ENCODE measurements at regions of chr18 and their contacts with region 1.

Region 1: GRCh38 chr18:616380-616995 is 19.7 kb downstream of the CLUL1 start:
- DNase-seq: peak; percentile 65
- ATAC-seq: peak; percentile 84
- H3K4me3 ChIP-seq: no peak overlapping the region
- H3K27ac ChIP-seq: no peak overlapping the region
- H3K4me1 ChIP-seq: no peaks in the 10 kb centered on the region
- H3K27me3 ChIP-seq: peaks cover 52% of the 10 kb centered on the region
- CTCF ChIP-seq: peak; percentile 79

Region 2: GRCh38 chr18:286515-287310 is 329.8 kb before region 1 on chr18:
- CTCF ChIA-PET with region 1: no interaction called
- POLR2A ChIA-PET with region 1: no interaction called
- intact Hi-C with region 1: loop called (anchors 1 kb)
- DNase-seq: peak; percentile 38
- ATAC-seq: peak; percentile 61; the same call in 1 of the 2 replicates
- H3K4me3 ChIP-seq: no peak overlapping the region
- H3K27ac ChIP-seq: no peak overlapping the region
- H3K4me1 ChIP-seq: no peaks in the 10 kb centered on the region
- H3K27me3 ChIP-seq: peaks cover 13% of the 10 kb centered on the region; the same call in 1 of the 2 replicates
- CTCF ChIP-seq: peak; percentile 70

Region 3: GRCh38 chr18:477565-477964 is 138.9 kb before region 1 on chr18:
- CTCF ChIA-PET with region 1: no interaction called
- POLR2A ChIA-PET with region 1: no interaction called
- intact Hi-C with region 1: loop called (anchors 10 kb)
- DNase-seq: peak; percentile 50
- ATAC-seq: peak; percentile 60
- H3K4me3 ChIP-seq: no peak overlapping the region
- H3K27ac ChIP-seq: no peak overlapping the region
- H3K4me1 ChIP-seq: peaks cover 7% of the 10 kb centered on the region; the same call in 1 of the 2 replicates
- H3K27me3 ChIP-seq: peaks cover 18% of the 10 kb centered on the region
- CTCF ChIP-seq: peak; percentile 77

Region 4: GRCh38 chr18:499551-500408 is 116.7 kb before region 1 on chr18:
- CTCF ChIA-PET with region 1: no interaction called
- POLR2A ChIA-PET with region 1: no interaction called
- intact Hi-C with region 1: loop called (anchors 5 kb)
- DNase-seq: peak; percentile 52
- ATAC-seq: peak; percentile 37
- H3K4me3 ChIP-seq: peak overlapping the region; percentile 44; the same call in 1 of the 2 replicates
- H3K27ac ChIP-seq: no peak overlapping the region
- H3K4me1 ChIP-seq: peaks cover 13% of the 10 kb centered on the region
- H3K27me3 ChIP-seq: peaks cover 64% of the 10 kb centered on the region
- CTCF ChIP-seq: no peak

Region 5: DNA sequence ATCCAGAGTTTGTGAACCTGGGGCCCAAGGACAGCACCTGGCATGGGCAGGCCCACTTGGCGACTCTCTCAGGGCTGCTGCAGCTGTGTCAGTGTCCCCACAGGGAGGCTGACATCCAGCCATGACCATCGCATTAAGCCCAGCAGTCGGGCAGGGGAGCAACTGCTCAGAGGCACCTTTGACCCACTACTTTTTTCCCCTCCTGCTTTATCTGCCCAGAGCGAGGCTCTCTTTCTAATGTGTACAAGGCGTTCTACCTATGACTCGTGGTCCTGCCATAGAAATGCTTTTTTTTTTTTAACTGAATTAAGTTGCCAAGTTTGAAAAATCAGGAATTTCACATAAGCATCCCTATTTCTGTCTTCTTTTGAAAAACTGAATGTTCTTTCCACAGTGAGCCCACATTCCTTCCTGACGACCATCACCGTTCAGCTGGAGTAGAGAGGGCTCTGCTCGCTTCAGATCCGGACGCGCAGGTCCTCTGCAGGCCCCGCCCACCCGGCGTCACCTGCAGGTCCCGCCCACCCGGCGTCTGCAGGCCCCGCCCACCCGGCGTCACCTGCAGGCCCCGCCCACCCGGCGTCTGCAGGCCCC is 20.1 kb before region 1 on chr18:
- CTCF ChIA-PET with region 1: no interaction called
- POLR2A ChIA-PET with region 1: no interaction called
- intact Hi-C with region 1: loop called (anchors 1 kb)
- DNase-seq: peak; percentile 61
- ATAC-seq: peak; percentile 76
- H3K4me3 ChIP-seq: peak overlapping the region; percentile 47; the same call in 1 of the 2 replicates
- H3K27ac ChIP-seq: no peak overlapping the region
- H3K4me1 ChIP-seq: peaks cover 10% of the 10 kb centered on the region; the same call in 1 of the 2 replicates
- H3K27me3 ChIP-seq: peaks cover 60% of the 10 kb centered on the region
- CTCF ChIP-seq: no peak